CD4-positive, alpha-beta memory T cell (primary cell): ENCODE measurements at regions of chr10 and their contacts with region 1.

Region 1: DNA sequence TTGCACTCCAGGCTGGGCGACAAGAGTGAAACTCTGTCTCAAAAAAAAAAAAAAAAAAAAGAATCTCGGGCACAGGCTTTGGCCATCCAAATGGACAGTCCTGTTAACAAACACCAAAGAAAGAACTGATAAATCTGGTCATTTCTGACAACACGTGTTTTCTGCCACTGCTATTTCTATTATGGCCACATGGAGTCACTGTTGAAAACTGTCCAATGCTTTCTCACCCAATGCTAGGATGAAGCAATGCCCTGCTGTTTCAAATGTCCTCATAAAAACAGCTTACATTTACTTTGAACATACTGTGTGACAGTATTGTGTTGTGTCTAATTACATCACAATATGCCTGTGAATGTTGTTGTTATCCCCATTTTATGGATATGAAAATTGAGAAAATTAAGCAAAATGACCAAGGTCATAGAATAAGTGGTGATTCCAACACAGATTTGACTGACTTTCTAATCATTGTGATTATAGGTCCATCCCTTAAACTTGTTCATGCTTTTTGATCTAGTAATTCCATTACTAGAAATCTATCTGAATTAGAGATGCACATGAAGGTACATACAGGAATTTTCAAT is 19.9 kb upstream of the MAP3K8 start:
- DNase-seq: peak in 4 of 5 donors; percentile 46 to 53 (median 52)
- H3K4me3 ChIP-seq: no peak overlapping the region
- H3K4me3 Mint-ChIP-seq: no peak overlapping the region
- H3K27ac ChIP-seq: no peak overlapping the region
- H3K27ac Mint-ChIP-seq: no peak overlapping the region
- H3K4me1 ChIP-seq: peaks cover 15% of the 10 kb centered on the region
- H3K4me1 Mint-ChIP-seq: peaks cover 11 to 19% (median 16%) of the 10 kb centered on the region in 4 donors
- H3K27me3 ChIP-seq: no peaks in the 10 kb centered on the region
- H3K27me3 Mint-ChIP-seq: no peaks in the 10 kb centered on the region

Region 2: GRCh38 chr10:30392564-30392990 is 21.5 kb before region 1 on chr10:
- CTCF ChIA-PET with region 1: interaction called, 9 read pairs
- POLR2A ChIA-PET with region 1: no interaction called
- intact Hi-C with region 1: loop called (anchors 1 kb)
- DNase-seq: peak; percentile 66 to 75 (median 67)
- H3K4me3 ChIP-seq: no peak overlapping the region
- H3K4me3 Mint-ChIP-seq: peak overlapping the region in 1 of 8 donors; percentile 4
- H3K27ac ChIP-seq: no peak overlapping the region
- H3K27ac Mint-ChIP-seq: peak overlapping the region in 1 of 7 donors; percentile 62
- H3K4me1 ChIP-seq: peaks cover 6% of the 10 kb centered on the region
- H3K4me1 Mint-ChIP-seq: peaks cover 2 to 5% (median 4%) of the 10 kb centered on the region in 4 donors
- H3K27me3 ChIP-seq: no peaks in the 10 kb centered on the region
- H3K27me3 Mint-ChIP-seq: peaks cover 8 to 13% of the 10 kb centered on the region in 2 donors

Region 3: DNA sequence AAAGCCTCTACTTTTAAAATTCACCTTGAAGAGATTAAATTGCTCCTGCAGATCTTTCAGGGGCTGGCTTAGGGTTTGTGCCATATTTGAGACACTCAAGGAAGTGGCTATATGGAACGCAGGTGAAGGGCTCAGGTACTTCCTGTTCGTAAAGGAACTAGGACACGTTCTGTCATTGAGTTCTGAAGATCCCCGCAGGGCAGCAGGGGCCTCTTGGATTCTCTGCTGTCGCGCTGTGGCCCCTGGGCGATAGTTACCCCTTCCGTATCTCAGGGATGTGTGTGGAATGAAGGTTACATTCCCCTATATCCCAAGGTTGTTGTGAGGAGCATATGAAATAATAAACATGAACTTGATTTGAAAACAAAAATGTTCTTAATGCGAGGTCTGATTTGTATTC is 194.3 kb after region 1 on chr10:
- CTCF ChIA-PET with region 1: no interaction called
- POLR2A ChIA-PET with region 1: no interaction called
- intact Hi-C with region 1: no loop called
- DNase-seq: no peak
- H3K4me3 ChIP-seq: no peak overlapping the region
- H3K4me3 Mint-ChIP-seq: no peak overlapping the region
- H3K27ac ChIP-seq: no peak overlapping the region
- H3K27ac Mint-ChIP-seq: no peak overlapping the region
- H3K4me1 ChIP-seq: no peaks in the 10 kb centered on the region
- H3K4me1 Mint-ChIP-seq: peaks cover 0 to 5% (median 2%) of the 10 kb centered on the region in 4 donors
- H3K27me3 ChIP-seq: no peaks in the 10 kb centered on the region
- H3K27me3 Mint-ChIP-seq: peaks cover 26 to 39% of the 10 kb centered on the region in 2 donors